ENCODE measurements at regions of chr4 and their contacts with region 1.

Region 1: DNA sequence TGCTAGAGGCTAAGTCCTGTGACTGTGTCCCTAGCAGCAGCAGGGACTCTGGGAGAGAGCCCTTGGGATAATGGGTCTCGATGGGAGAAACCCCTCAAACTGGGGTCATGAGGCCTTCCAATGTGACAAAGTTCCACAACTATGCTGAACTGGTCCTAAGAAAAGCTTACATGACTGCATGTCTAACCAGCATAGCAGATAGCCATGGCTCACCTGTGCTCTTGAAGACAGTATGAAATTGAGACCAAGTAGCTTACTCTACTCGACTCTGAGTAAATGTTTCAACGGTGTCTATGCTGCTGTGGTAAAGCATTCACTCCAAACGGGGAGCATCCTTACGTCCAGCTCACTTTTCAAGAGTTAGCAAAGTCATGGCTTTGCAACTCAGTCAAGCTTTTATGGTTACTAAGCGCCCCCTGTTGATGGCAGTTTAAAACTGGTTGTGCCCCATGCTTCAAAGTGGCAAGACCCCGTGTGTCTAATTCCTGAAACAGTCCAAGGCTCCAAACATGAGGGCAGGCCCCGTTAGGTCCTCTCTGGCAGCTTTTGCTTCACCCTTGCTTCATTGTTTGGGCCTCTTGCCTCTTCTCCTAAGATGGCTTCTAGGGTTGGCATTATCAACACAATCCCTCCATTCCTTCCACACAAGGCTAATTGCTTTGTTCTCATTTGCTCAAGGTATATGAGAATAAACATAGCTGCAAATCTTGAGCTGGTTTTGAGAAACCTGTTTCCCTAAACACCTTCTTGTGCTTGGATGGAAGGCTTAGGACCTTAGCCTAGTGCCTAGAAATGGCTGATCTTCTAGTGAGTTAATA is 46.6 kb downstream of the CCNG2 start:
- DNase-seq: peak; percentile 68
- H3K4me3 Mint-ChIP-seq: no peak overlapping the region
- H3K27ac Mint-ChIP-seq: no peak overlapping the region
- H3K4me1 Mint-ChIP-seq: peaks cover 6% of the 10 kb centered on the region
- H3K27me3 Mint-ChIP-seq: no peaks in the 10 kb centered on the region

Region 2: GRCh38 chr4:76430519-76431388 is 772.8 kb before region 1 on chr4:
- CTCF ChIA-PET with region 1: interaction called, 8 read pairs
- POLR2A ChIA-PET with region 1: no interaction called
- intact Hi-C with region 1: loop called (anchors 5 kb)
- DNase-seq: no peak
- H3K4me3 Mint-ChIP-seq: no peak overlapping the region
- H3K27ac Mint-ChIP-seq: no peak overlapping the region
- H3K4me1 Mint-ChIP-seq: no peaks in the 10 kb centered on the region
- H3K27me3 Mint-ChIP-seq: peaks cover 20% of the 10 kb centered on the region

Region 3: GRCh38 chr4:77031544-77031943 is 172.0 kb before region 1 on chr4:
- CTCF ChIA-PET with region 1: interaction called, 11 read pairs
- POLR2A ChIA-PET with region 1: no interaction called
- intact Hi-C with region 1: no loop called
- DNase-seq: peak; percentile 35
- H3K4me3 Mint-ChIP-seq: no peak overlapping the region
- H3K27ac Mint-ChIP-seq: no peak overlapping the region
- H3K4me1 Mint-ChIP-seq: peaks cover 46% of the 10 kb centered on the region
- H3K27me3 Mint-ChIP-seq: peaks cover 9% of the 10 kb centered on the region

Region 4: DNA sequence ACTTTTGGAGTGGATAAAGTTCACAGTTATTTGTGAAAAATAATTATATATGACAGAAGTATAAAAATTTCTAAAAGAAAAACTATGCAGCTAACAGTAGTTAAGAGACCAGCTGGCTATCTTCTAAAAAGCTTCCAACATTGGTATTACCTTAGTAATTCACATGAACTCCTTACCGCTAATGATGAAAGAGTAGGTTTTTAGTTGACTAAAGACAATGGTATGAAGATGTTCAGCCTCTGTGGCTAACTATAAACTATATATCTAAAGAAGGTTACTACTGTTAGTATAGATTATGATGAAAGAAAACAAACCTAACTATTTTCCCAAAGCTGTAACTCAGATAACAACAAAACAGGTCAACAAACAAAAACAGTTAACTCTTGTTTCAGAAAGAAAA is 138.2 kb before region 1 on chr4:
- CTCF ChIA-PET with region 1: interaction called, 13 read pairs
- POLR2A ChIA-PET with region 1: interaction called, 3 read pairs
- intact Hi-C with region 1: no loop called
- DNase-seq: no peak
- H3K4me3 Mint-ChIP-seq: no peak overlapping the region
- H3K27ac Mint-ChIP-seq: no peak overlapping the region
- H3K4me1 Mint-ChIP-seq: peaks cover 33% of the 10 kb centered on the region
- H3K27me3 Mint-ChIP-seq: no peaks in the 10 kb centered on the region

Region 5: GRCh38 chr4:77104791-77105540 is 98.6 kb before region 1 on chr4:
- CTCF ChIA-PET with region 1: interaction called, 252 read pairs
- POLR2A ChIA-PET with region 1: no interaction called
- intact Hi-C with region 1: no loop called
- DNase-seq: no peak
- H3K4me3 Mint-ChIP-seq: no peak overlapping the region
- H3K27ac Mint-ChIP-seq: no peak overlapping the region
- H3K4me1 Mint-ChIP-seq: peaks cover 9% of the 10 kb centered on the region
- H3K27me3 Mint-ChIP-seq: peaks cover 9% of the 10 kb centered on the region

Region 6: DNA sequence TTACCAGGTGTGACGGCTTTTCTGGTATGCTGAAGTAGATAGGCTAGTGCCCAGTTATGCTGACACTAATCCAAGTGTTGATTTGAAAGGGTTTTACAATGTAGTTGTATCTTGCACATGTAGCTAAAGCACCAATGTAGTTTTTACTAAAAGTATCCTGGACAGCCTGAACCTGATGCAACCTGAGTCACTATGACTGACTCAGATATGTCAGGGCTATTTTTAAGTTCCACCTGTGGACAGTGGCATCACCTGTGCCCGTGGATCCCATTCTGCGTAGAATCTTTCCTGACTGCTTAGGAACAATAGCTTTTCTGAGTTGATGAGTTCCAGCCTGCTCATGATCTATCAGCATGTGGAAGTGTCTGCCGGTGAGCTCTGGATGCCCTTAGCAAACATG is 11.5 kb after region 1 on chr4:
- CTCF ChIA-PET with region 1: interaction called, 17 read pairs
- POLR2A ChIA-PET with region 1: no interaction called
- intact Hi-C with region 1: no loop called
- DNase-seq: no peak
- H3K4me3 Mint-ChIP-seq: no peak overlapping the region
- H3K27ac Mint-ChIP-seq: no peak overlapping the region
- H3K4me1 Mint-ChIP-seq: no peaks in the 10 kb centered on the region
- H3K27me3 Mint-ChIP-seq: no peaks in the 10 kb centered on the region